B cell (primary cell): ENCODE measurements at regions of chr5 and their contacts with region 1.

Region 1: DNA sequence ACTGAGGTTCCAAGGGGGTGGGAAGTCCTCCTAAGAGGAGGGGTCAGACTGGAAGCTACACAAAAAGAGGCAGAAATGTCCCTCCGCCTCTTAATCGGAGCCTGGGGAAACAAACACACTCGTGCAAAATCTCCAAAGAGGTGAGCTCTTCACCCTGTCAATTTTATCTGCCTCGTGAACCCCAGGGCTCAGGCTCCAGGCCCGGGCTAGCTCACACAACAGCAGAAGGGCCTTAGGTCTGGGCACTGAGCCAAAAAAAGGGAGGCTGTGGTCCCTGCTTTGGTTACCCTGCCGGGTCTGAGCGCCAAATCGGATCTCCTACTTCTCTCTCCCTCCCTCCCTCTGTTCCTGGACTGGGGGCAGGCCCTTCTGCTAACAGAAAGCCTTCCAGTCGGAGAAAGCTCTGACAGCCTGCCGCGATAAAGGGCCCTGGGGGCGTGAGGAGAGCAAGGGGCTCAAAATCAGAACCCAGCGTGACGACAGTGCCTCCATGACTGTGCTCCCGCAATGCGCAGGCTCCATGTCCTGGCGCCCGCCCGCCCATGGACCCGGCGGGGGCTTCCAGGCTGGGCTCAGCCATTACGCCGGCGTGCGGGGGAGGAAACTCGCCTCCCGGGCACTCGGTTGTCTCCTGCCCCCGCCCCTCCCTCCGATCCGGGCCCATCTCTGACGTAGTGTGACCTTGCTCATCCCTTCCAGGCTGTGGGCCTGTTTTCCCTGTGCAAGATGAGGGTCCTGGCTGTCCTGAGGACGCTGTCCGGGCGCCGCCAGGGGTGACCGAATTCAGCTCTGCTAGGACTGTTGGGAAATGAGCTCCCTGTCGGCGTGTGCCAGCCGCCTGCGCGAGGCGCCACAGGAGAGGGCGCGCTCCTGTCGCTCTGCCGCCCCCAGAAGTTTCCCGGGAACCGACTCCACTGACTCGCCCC is 865 bp upstream of the SLC22A4 start:
- DNase-seq: peak; percentile 55
- ATAC-seq: peak; percentile 34
- H3K4me3 ChIP-seq: peak overlapping the region; percentile 22 to 69 (median 57)
- H3K4me3 Mint-ChIP-seq: peak overlapping the region; percentile 92
- H3K27ac ChIP-seq: peak overlapping the region in 1 of 2 donors; percentile 28
- H3K27ac Mint-ChIP-seq: peak overlapping the region; percentile 41
- H3K4me1 ChIP-seq: peaks cover 15 to 23% of the 10 kb centered on the region in 2 donors
- H3K4me1 Mint-ChIP-seq: peaks cover 21% of the 10 kb centered on the region
- H3K27me3 ChIP-seq: peaks cover 0 to 42% (median 25%) of the 10 kb centered on the region in 4 experiments
- H3K27me3 Mint-ChIP-seq: peaks cover 53% of the 10 kb centered on the region
- CTCF ChIP-seq: no peak

Region 2: GRCh38 chr5:132272311-132273210 is 20.8 kb before region 1 on chr5:
- CTCF ChIA-PET with region 1: interaction called, 13 read pairs
- POLR2A ChIA-PET with region 1: no interaction called
- intact Hi-C with region 1: no loop called
- DNase-seq: peak; percentile 71
- ATAC-seq: peak; percentile 49
- H3K4me3 ChIP-seq: no peak overlapping the region
- H3K4me3 Mint-ChIP-seq: peak overlapping the region; percentile 59
- H3K27ac ChIP-seq: no peak overlapping the region
- H3K27ac Mint-ChIP-seq: no peak overlapping the region
- H3K4me1 ChIP-seq: peaks cover 10 to 12% of the 10 kb centered on the region in 2 donors
- H3K4me1 Mint-ChIP-seq: peaks cover 12% of the 10 kb centered on the region
- H3K27me3 ChIP-seq: peaks cover 0 to 23% (median 3%) of the 10 kb centered on the region in 4 experiments
- H3K27me3 Mint-ChIP-seq: peaks cover 18% of the 10 kb centered on the region
- CTCF ChIP-seq: peak; percentile 85

Region 3: GRCh38 chr5:132369474-132370180 is 76.3 kb after region 1 on chr5 and contains the start of gene SLC22A5:
- CTCF ChIA-PET with region 1: interaction called, 5 read pairs
- POLR2A ChIA-PET with region 1: interaction called, 3 read pairs
- intact Hi-C with region 1: loop called (anchors 5 kb)
- DNase-seq: peak; percentile 88
- ATAC-seq: peak; percentile 93
- H3K4me3 ChIP-seq: peak within 1 kb of the TSS in 4 of 5 experiments; percentile 52 to 77 (median 68)
- H3K4me3 Mint-ChIP-seq: peak within 1 kb of the TSS; percentile 87
- H3K27ac ChIP-seq: peak within 1 kb of the TSS; percentile 73 to 82
- H3K27ac Mint-ChIP-seq: peak within 1 kb of the TSS; percentile 81
- H3K4me1 ChIP-seq: peaks cover 10 to 15% of the 10 kb centered on the region in 2 donors
- H3K4me1 Mint-ChIP-seq: peaks cover 19% of the 10 kb centered on the region
- H3K27me3 ChIP-seq: no peaks in the 10 kb centered on the region
- H3K27me3 Mint-ChIP-seq: no peaks in the 10 kb centered on the region
- CTCF ChIP-seq: no peak
- total RNA-seq, gene SLC22A5: 12.9 and 13.2 TPM in 2 replicates